ENCODE measurements at regions of chr17 and their contacts with region 1.

Region 1: DNA sequence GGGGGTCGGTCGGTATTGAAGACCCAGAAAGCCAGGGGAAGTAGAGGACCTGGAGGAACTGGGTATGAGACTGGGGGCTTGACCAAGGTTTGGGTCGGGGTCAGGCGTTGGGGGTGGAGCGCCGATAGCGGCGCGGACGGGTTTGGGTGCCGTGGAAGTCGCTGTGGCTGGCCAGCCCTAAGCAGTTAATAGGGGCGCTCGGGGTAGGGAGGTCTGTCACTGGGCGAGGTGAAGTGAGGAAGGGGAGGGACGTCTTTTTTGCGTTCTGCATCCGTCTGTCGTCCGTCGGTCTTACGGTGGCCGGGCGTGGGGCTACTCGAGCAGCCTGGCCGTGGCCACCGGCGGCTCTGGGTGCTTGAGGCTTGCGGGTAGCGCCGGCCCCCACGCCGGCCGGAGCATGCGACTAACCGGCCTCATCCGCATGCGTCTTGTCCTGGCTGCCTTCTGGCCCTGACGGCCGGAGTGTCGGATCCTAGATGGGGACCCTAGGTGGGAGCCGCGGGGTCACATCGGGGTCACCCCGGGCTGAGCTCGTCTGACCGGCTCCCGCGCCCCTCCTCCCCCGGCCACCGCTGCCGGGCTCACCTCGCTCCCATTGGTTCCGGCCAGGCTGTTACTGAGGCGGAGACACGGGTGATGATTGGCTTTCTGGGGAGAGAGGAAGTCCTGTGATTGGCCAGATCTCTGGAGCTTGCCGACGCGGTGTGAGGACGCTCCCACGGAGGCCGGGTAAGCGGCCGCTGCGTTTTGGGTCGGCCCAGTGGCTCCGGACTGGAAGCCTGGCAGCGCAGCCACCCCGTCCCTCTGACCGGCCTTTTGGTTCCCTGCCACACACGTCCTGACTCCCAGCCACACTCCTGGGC is 10.3 kb upstream of the TMEM88 start:
- DNase-seq: peak; percentile 92
- ATAC-seq: peak; percentile 51
- H3K4me3 Mint-ChIP-seq: peak overlapping the region; percentile 97
- H3K27ac Mint-ChIP-seq: peak overlapping the region; percentile 96
- H3K4me1 Mint-ChIP-seq: peaks cover 40% of the 10 kb centered on the region
- H3K27me3 Mint-ChIP-seq: no peaks in the 10 kb centered on the region

Region 2: GRCh38 chr17:7014261-7014994 is 830.1 kb before region 1 on chr17:
- CTCF ChIA-PET with region 1: no interaction called
- POLR2A ChIA-PET with region 1: no interaction called
- intact Hi-C with region 1: loop called in 1 of 2 experiments (anchors 2 kb)
- DNase-seq: peak; percentile 99
- ATAC-seq: peak; percentile 88
- H3K4me3 Mint-ChIP-seq: peak overlapping the region; percentile 92
- H3K27ac Mint-ChIP-seq: peak overlapping the region; percentile 99
- H3K4me1 Mint-ChIP-seq: peaks cover 54% of the 10 kb centered on the region
- H3K27me3 Mint-ChIP-seq: no peaks in the 10 kb centered on the region

Region 3: GRCh38 chr17:7252176-7253043 is 592.1 kb before region 1 on chr17 and contains the start of gene ELP5:
- CTCF ChIA-PET with region 1: no interaction called
- POLR2A ChIA-PET with region 1: no interaction called
- intact Hi-C with region 1: loop called in 1 of 2 experiments (anchors 5 kb)
- DNase-seq: peak; percentile 94
- ATAC-seq: peak; percentile 65
- H3K4me3 Mint-ChIP-seq: peak within 1 kb of the TSS; percentile 93
- H3K27ac Mint-ChIP-seq: peak within 1 kb of the TSS; percentile 99
- H3K4me1 Mint-ChIP-seq: peaks cover 40% of the 10 kb centered on the region
- H3K27me3 Mint-ChIP-seq: no peaks in the 10 kb centered on the region
- total RNA-seq, gene ELP5: 58.1 to 62.3 TPM

Region 4: DNA sequence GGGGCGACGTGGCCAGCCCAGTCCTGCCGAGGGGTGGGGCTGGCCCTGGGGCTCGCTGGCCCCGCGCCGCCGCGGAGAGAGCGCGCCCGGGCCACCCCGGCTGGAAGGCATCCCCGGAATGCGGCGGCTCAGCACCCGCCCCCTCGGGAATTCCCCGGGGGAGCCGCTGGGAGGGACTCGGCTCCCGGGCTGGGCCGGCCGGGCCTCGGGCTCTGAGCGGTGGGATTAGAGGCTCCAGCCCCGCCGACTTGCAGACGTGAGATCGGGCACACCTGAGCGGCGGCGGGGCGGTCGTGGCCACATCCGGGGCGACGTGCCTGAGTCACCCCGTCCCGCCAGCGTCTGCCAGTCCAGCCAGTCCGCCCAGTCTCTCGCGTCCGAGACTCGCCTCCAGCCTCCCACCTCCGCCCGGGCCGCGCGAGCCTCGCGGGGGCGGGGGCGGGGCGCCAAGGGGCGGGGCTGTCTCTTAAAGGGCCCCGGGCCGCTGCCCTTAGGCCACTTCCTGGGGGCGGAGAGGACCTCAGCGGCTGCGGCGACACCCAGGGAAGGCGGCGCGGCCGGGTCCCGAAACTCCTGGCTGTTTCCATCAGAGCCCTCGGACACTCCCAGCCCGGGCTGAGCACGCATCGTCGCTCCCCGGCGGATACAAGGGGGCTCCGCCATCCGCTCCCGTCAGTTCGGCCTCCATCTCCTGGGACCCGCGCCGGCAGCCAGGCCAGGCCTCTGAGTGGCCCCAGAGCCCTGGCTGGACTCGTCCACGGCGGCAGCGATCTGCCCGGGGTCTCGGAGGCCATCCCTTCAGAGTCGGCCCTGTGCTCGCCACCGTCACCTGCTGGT is 492.6 kb before region 1 on chr17 and contains the start of gene KCTD11:
- CTCF ChIA-PET with region 1: no interaction called
- POLR2A ChIA-PET with region 1: no interaction called
- intact Hi-C with region 1: loop called in 1 of 2 experiments (anchors 5 kb)
- DNase-seq: peak; percentile 90
- ATAC-seq: peak; percentile 58
- H3K4me3 Mint-ChIP-seq: peak within 1 kb of the TSS; percentile 79
- H3K27ac Mint-ChIP-seq: peak within 1 kb of the TSS; percentile 84
- H3K4me1 Mint-ChIP-seq: peaks cover 55% of the 10 kb centered on the region
- H3K27me3 Mint-ChIP-seq: no peaks in the 10 kb centered on the region
- total RNA-seq, gene KCTD11: 5.0 to 6.1 TPM

Region 5: DNA sequence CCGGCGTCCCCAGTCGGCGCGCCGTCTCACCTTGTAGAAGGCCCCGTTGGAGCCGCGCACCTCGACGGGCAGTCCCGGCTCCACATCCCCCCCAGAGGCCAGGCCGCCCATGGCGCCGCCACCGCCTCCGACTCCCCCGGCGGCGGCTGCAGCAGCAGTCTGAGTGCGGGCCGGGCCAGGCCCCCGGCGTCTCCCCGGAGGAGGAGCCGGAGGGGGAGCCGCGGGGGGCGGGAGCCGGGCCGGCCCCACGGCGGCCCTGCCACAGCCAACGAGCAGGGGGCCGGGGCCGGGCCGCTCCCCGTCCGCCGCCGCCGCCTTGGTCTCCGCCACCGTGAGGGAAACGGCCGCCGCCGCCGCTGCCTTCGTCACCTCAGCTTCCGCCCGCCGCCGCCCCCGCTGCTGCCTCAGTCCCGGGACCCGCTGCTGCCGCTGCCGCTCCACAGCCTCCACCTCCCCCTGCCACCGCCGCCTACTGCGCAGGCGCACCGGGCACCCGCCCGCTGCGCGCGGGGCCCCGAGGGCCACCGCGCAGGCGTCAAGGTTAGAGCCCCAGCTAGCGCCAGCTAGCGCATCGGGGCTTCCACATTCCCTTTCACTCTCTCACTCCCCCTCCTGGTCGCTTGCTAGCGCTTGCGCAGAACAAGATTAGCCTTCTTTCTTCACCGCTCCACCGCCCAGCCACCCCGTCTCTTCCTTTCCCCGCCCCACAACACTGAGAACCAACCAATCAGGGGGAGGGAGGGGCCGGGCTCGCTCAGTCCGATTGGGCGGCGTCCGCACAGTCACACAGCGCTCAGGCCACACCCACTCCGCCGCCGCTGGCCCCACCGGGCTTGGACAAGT is 229.9 kb before region 1 on chr17 and contains the start of gene FXR2:
- CTCF ChIA-PET with region 1: no interaction called
- POLR2A ChIA-PET with region 1: no interaction called
- intact Hi-C with region 1: loop called in 1 of 2 experiments (anchors 5 kb)
- DNase-seq: peak; percentile 100
- ATAC-seq: peak; percentile 95
- H3K4me3 Mint-ChIP-seq: peak within 1 kb of the TSS; percentile 85
- H3K27ac Mint-ChIP-seq: peak within 1 kb of the TSS; percentile 93
- H3K4me1 Mint-ChIP-seq: peaks cover 32% of the 10 kb centered on the region
- H3K27me3 Mint-ChIP-seq: no peaks in the 10 kb centered on the region
- total RNA-seq, gene FXR2: 35.6 to 50.2 TPM

Region 6: GRCh38 chr17:7806587-7806986 is 37.9 kb before region 1 on chr17:
- CTCF ChIA-PET with region 1: no interaction called
- POLR2A ChIA-PET with region 1: no interaction called
- intact Hi-C with region 1: no loop called
- DNase-seq: no peak
- ATAC-seq: no peak
- H3K4me3 Mint-ChIP-seq: no peak overlapping the region
- H3K27ac Mint-ChIP-seq: no peak overlapping the region
- H3K4me1 Mint-ChIP-seq: no peaks in the 10 kb centered on the region
- H3K27me3 Mint-ChIP-seq: peaks cover 7% of the 10 kb centered on the region

Region 7: DNA sequence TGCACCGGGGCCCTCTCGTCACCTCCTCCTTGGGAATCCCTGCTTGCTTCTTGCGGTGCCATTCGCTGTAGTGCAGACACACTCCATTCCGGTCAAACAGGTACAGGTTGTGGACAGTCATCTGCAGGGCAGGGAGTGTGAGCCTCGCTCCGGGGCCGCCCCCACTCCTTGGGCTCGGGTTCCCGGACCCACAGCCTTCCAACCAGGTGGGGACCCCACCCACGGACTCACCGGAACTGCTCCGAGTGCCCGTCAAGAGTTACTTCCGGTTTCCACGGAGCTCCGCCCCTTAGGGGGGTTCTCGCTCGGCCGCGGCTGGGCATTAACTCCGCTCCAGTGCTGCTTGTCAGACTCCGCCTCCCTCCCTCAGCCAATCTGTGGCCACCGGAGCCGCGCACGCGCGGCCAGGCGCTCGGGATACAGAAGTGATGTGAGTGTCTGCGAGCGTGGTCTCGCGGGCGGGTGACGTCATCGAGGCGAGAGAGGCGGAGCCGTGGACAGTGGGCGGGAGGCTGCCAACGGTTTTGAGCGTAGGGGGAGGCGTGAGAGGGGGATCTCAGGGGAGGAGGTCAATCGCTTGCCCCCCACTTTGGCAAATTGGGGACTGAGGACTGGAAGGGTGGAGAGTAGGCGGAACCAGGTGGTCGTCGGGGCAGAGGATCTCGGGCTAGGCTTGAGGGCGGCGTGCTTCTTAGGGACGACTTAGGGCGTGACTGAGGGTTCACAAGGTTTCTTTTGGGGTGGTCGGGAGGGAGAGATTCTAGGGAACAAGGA is 87.4 kb after region 1 on chr17 and contains the starts of genes CNTROB and TRAPPC1:
- CTCF ChIA-PET with region 1: interaction called, 3 read pairs
- POLR2A ChIA-PET with region 1: no interaction called
- intact Hi-C with region 1: loop called in 1 of 2 experiments (anchors 1 kb)
- DNase-seq: peak; percentile 100
- ATAC-seq: peak; percentile 99
- H3K4me3 Mint-ChIP-seq: peak within 1 kb of the TSS; percentile 95
- H3K27ac Mint-ChIP-seq: peak within 1 kb of the TSS; percentile 96
- H3K4me1 Mint-ChIP-seq: peaks cover 44% of the 10 kb centered on the region
- H3K27me3 Mint-ChIP-seq: no peaks in the 10 kb centered on the region
- total RNA-seq, gene CNTROB: 53.0 to 80.5 TPM
- total RNA-seq, gene TRAPPC1: 166 to 169 TPM

Region 8: DNA sequence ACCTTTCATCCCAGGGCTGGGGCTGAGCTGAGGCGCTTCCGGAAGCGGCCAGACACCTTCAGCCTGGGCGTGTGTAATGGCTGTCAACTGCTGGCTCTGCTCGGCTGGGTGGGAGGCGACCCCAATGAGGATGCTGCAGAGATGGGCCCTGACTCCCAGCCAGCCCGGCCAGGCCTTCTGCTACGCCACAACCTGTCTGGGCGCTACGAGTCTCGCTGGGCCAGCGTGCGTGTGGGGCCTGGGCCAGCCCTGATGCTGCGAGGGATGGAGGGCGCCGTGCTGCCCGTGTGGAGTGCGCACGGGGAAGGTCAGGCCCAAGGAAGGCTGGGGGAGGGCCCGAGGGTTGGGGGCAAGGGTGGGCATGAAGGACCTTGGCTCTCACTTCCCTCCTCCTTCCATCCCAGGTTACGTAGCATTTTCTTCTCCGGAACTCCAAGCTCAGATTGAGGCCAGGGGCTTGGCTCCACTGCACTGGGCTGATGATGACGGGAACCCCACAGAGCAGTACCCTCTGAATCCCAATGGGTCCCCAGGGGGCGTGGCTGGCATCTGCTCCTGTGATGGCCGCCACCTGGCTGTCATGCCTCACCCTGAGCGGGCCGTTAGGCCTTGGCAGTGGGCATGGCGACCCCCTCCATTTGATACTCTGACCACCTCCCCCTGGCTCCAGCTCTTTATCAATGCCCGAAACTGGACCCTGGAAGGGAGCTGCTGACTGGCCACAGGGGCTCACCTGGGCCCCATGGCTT is 424.2 kb after region 1 on chr17:
- CTCF ChIA-PET with region 1: no interaction called
- POLR2A ChIA-PET with region 1: no interaction called
- intact Hi-C with region 1: no loop called
- DNase-seq: no peak
- ATAC-seq: no peak
- H3K4me3 Mint-ChIP-seq: no peak overlapping the region
- H3K27ac Mint-ChIP-seq: no peak overlapping the region
- H3K4me1 Mint-ChIP-seq: no peaks in the 10 kb centered on the region
- H3K27me3 Mint-ChIP-seq: no peaks in the 10 kb centered on the region

Region 9: GRCh38 chr17:8383143-8383822 is 538.8 kb after region 1 on chr17 and contains the start of gene RPL26:
- CTCF ChIA-PET with region 1: no interaction called
- POLR2A ChIA-PET with region 1: no interaction called
- intact Hi-C with region 1: loop called in 1 of 2 experiments (anchors 5 kb)
- DNase-seq: peak; percentile 96
- ATAC-seq: peak; percentile 92
- H3K4me3 Mint-ChIP-seq: peak within 1 kb of the TSS; percentile 100
- H3K27ac Mint-ChIP-seq: peak within 1 kb of the TSS; percentile 99
- H3K4me1 Mint-ChIP-seq: peaks cover 50% of the 10 kb centered on the region
- H3K27me3 Mint-ChIP-seq: no peaks in the 10 kb centered on the region
- total RNA-seq, gene RPL26: 3,064 to 3,721 TPM